ENCODE measurements at regions of chr2 and their contacts with region 1.

Region 1: GRCh38 chr2:118882709-118883210 is 35.3 kb upstream of the EN1 start:
- DNase-seq: peak; percentile 70
- H3K4me3 Mint-ChIP-seq: peak overlapping the region; percentile 46
- H3K27ac Mint-ChIP-seq: no peak overlapping the region
- H3K4me1 Mint-ChIP-seq: peaks cover 7% of the 10 kb centered on the region
- H3K27me3 Mint-ChIP-seq: peaks cover 19% of the 10 kb centered on the region

Region 2: GRCh38 chr2:118865106-118865505 is 17.7 kb before region 1 on chr2:
- CTCF ChIA-PET with region 1: interaction called, 17 read pairs
- intact Hi-C with region 1: no loop called
- DNase-seq: peak; percentile 32
- H3K4me3 Mint-ChIP-seq: no peak overlapping the region
- H3K27ac Mint-ChIP-seq: no peak overlapping the region
- H3K4me1 Mint-ChIP-seq: no peaks in the 10 kb centered on the region
- H3K27me3 Mint-ChIP-seq: peaks cover 40% of the 10 kb centered on the region

Region 3: GRCh38 chr2:119126650-119127049 is 243.9 kb after region 1 on chr2:
- CTCF ChIA-PET with region 1: interaction called, 14 read pairs
- intact Hi-C with region 1: loop called (anchors 1 kb)
- DNase-seq: peak; percentile 42
- H3K4me3 Mint-ChIP-seq: no peak overlapping the region
- H3K27ac Mint-ChIP-seq: no peak overlapping the region
- H3K4me1 Mint-ChIP-seq: peaks cover 2% of the 10 kb centered on the region
- H3K27me3 Mint-ChIP-seq: peaks cover 24% of the 10 kb centered on the region

Region 4: GRCh38 chr2:119264781-119265692 is 382.3 kb after region 1 on chr2:
- CTCF ChIA-PET with region 1: interaction called, 7 read pairs
- intact Hi-C with region 1: loop called (anchors 5 kb)
- DNase-seq: peak; percentile 41
- H3K4me3 Mint-ChIP-seq: no peak overlapping the region
- H3K27ac Mint-ChIP-seq: no peak overlapping the region
- H3K4me1 Mint-ChIP-seq: no peaks in the 10 kb centered on the region
- H3K27me3 Mint-ChIP-seq: peaks cover 4% of the 10 kb centered on the region

Region 5: GRCh38 chr2:119476301-119477021 is 593.7 kb after region 1 on chr2:
- CTCF ChIA-PET with region 1: interaction called, 4 read pairs
- intact Hi-C with region 1: loop called (anchors 1 kb)
- DNase-seq: peak; percentile 39
- H3K4me3 Mint-ChIP-seq: no peak overlapping the region
- H3K27ac Mint-ChIP-seq: no peak overlapping the region
- H3K4me1 Mint-ChIP-seq: no peaks in the 10 kb centered on the region
- H3K27me3 Mint-ChIP-seq: peaks cover 9% of the 10 kb centered on the region